Left ventricle myocardium inferior (tissue), 1 donor: ENCODE measurements at regions of chr10 and their contacts with region 1.

Region 1: GRCh38 chr10:124741281-124741921 is 2.8 kb downstream of the FAM53B start:
- DNase-seq: peak; percentile 87
- H3K4me3 ChIP-seq: peak overlapping the region; percentile 82
- H3K27ac ChIP-seq: peak overlapping the region; percentile 93
- H3K4me1 ChIP-seq: peaks cover 88% of the 10 kb centered on the region
- H3K27me3 ChIP-seq: no peaks in the 10 kb centered on the region
- CTCF ChIP-seq: peak; percentile 91

Region 2: GRCh38 chr10:124539935-124540641 is 201.3 kb before region 1 on chr10:
- intact Hi-C with region 1: loop called (anchors 5 kb)
- DNase-seq: peak; percentile 71
- H3K4me3 ChIP-seq: no peak overlapping the region
- H3K27ac ChIP-seq: no peak overlapping the region
- H3K4me1 ChIP-seq: peaks cover 23% of the 10 kb centered on the region
- H3K27me3 ChIP-seq: no peaks in the 10 kb centered on the region
- CTCF ChIP-seq: peak; percentile 91

Region 3: DNA sequence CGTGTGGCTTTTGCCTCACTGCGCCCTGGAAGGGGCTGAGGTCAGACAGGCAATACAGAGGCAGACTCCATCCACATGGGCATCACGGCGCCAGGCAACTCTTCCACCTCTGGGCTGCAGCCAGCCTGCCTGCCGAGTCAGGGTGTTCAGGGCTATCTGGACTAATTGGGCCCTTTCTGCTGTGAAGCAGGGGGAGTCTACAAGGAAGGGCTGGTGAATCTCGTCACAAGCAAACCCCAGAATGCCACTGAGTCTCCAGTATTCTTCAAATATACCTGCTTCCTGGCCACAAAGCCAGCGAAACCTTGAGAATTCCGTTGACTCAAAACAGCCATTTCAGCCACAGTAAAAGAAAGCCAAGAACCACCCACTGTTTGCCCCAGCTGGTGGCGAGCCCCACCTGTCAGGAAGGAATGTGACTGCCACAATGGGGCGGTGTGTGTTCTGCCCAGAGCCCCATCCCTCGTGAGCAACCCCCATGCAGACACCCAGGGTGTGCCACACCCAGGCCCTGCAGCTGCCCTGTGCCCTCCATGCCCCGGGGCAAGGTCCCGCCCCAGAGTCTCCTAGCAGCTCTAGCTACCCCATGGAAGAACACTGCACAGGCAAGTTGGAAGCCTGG is 114.5 kb before region 1 on chr10:
- intact Hi-C with region 1: loop called (anchors 5 kb)
- DNase-seq: no peak
- H3K4me3 ChIP-seq: no peak overlapping the region
- H3K27ac ChIP-seq: peak overlapping the region; percentile 66
- H3K4me1 ChIP-seq: peaks cover 100% of the 10 kb centered on the region
- H3K27me3 ChIP-seq: no peaks in the 10 kb centered on the region
- CTCF ChIP-seq: no peak

Region 4: DNA sequence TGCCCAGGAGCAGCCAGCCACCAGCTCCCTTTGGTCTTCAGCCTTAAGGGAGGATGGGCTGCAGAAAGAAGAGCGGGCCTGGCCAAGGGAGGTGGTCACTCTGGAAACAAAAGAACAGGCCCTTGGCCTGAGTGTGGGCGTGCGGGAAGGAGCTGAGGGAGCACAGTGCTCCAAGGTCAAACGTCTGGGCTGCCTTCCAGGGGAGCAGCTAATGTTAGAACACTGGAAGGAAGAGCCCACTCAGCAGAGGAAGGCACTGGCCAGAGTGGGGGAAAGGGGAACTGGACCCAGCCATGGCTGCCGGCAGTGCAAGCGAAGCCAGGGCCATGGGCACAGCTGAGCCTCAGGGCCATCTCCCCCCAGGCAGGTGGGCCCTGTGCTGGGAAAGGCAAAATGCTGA is 40.0 kb before region 1 on chr10:
- intact Hi-C with region 1: loop called (anchors 5 kb)
- DNase-seq: peak; percentile 95
- H3K4me3 ChIP-seq: peak overlapping the region; percentile 6
- H3K27ac ChIP-seq: peak overlapping the region; percentile 92
- H3K4me1 ChIP-seq: peaks cover 100% of the 10 kb centered on the region
- H3K27me3 ChIP-seq: no peaks in the 10 kb centered on the region
- CTCF ChIP-seq: no peak

Region 5: DNA sequence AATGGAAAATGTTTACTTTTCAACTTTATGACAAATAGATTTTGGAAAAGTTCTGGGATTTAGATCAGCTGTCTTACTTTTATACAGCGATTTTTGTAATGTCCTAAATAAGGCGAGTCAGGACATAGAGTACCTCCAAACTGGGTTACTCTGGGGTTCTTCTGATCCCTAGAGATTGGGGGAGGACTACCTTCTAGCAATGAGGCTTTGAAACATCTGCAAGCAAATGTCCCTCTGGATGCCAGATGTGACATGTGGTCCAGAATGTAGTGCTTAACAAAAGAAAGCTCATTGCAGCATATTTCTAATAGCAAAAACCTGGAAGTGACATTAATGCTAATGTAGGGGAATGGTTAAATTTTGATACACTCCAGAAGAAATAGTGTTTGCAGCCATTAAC is 96.3 kb after region 1 on chr10:
- intact Hi-C with region 1: no loop called
- DNase-seq: no peak
- H3K4me3 ChIP-seq: no peak overlapping the region
- H3K27ac ChIP-seq: no peak overlapping the region
- H3K4me1 ChIP-seq: no peaks in the 10 kb centered on the region
- H3K27me3 ChIP-seq: no peaks in the 10 kb centered on the region
- CTCF ChIP-seq: no peak